Motor neuron (in vitro differentiated cells): ENCODE measurements at regions of chr2 and their contacts with region 1.

Region 1: DNA sequence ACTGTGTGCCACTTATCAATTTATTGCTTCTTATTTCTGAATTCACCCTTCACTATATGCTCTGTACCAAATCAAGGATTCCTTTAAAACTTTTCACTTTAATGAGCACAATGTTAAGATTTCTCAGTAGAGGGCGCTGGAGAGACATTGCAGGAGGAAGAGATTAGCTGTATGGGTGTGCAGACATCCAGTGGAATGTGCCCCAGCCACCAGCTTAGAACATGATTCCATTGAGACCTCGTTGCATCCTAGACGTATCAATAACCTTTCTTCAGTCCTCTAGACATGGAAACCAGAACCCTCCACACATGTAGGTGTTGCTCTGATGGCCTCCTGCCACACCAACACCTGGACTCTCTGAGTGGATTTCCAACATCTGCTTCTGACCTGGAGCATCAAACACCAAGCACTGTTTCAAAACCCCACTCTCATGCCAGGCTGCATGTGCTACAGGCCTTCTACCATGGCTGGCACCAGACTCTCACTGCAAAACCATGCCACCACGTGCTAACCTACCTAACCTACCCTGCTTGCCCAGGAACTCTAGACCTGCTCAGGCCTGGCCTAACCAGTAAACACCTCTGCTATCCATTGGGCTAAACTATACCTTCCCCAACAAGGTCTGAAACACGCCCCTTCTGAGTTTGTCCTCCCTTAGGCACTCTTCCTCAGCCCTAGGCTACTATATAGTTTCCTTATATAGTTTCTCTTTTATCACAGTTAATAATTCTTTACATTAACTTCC is 633.2 kb upstream of the PKDCC start:
- ATAC-seq: peak in 3 of 8 experiments; percentile 57 to 84 (median 63)
- H3K4me3 ChIP-seq: no peak overlapping the region
- H3K27ac ChIP-seq: no peak overlapping the region
- H3K4me1 ChIP-seq: peaks cover 0 to 2% of the 10 kb centered on the region in 2 donors

Region 2: GRCh38 chr2:40851661-40852060 is 563.0 kb before region 1 on chr2:
- in situ Hi-C with region 1: no loop called
- ATAC-seq: no peak
- H3K4me3 ChIP-seq: no peak overlapping the region
- H3K27ac ChIP-seq: no peak overlapping the region
- H3K4me1 ChIP-seq: peaks cover 0 to 4% of the 10 kb centered on the region in 2 donors

Region 3: GRCh38 chr2:41782306-41783158 is 367.9 kb after region 1 on chr2:
- in situ Hi-C with region 1: loop called in 1 of 9 experiments (anchors 25 kb)
- ATAC-seq: peak in 2 of 8 experiments; percentile 30 to 40
- H3K4me3 ChIP-seq: no peak overlapping the region
- H3K27ac ChIP-seq: no peak overlapping the region
- H3K4me1 ChIP-seq: no peaks in the 10 kb centered on the region